Naive thymus-derived CD4-positive, alpha-beta T cell (primary cell): ENCODE measurements at regions of chr2 and their contacts with region 1.

Region 1: DNA sequence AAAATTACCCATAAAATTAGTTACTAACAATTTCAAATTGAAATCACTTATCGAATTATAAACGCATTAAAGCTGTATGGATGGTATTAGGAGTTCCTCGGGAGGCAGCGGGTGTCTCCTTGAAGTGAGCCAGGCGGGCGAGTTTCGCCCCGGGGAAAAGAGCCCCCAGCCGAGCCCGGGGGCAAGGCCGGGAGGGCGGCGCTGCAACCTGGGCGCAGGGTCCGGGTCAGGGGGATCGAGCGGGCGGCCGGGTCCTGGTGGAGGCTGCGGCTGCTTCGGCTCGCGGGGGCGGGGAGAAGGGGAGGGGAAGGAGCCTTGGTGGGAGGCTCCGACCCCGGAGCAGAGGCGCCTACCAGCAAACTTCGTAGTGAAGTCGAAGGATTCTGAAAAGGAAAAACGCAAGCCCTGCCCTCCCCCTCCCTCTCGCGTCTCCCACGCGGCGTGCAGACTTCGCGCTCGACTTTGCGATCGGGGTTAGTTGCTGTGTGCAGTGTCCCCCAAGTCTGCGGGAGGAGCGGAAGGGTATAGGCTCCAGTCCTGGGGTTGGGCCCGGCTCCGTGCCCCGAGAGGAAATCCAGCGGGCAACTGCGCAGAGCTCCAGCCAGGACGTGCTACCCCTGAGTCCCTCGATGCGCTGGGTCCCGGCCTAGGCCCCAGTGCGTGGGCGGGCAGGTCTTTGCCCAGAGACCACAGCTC is 140.8 kb downstream of the MEIS1 start:
- DNase-seq: no peak
- ATAC-seq: no peak
- H3K4me3 ChIP-seq: no peak overlapping the region
- H3K4me3 Mint-ChIP-seq: peak overlapping the region in 7 of 10 donors; percentile 29 to 72 (median 64)
- H3K27ac ChIP-seq: no peak overlapping the region
- H3K27ac Mint-ChIP-seq: peak overlapping the region in 1 of 9 donors; percentile 29
- H3K4me1 ChIP-seq: no peaks in the 10 kb centered on the region
- H3K4me1 Mint-ChIP-seq: peaks cover 0 to 16% (median 11%) of the 10 kb centered on the region in 7 donors
- H3K27me3 ChIP-seq: peaks cover 0 to 6% of the 10 kb centered on the region in 2 donors
- H3K27me3 Mint-ChIP-seq: peaks cover 57 to 75% (median 71%) of the 10 kb centered on the region in 5 donors

Region 2: DNA sequence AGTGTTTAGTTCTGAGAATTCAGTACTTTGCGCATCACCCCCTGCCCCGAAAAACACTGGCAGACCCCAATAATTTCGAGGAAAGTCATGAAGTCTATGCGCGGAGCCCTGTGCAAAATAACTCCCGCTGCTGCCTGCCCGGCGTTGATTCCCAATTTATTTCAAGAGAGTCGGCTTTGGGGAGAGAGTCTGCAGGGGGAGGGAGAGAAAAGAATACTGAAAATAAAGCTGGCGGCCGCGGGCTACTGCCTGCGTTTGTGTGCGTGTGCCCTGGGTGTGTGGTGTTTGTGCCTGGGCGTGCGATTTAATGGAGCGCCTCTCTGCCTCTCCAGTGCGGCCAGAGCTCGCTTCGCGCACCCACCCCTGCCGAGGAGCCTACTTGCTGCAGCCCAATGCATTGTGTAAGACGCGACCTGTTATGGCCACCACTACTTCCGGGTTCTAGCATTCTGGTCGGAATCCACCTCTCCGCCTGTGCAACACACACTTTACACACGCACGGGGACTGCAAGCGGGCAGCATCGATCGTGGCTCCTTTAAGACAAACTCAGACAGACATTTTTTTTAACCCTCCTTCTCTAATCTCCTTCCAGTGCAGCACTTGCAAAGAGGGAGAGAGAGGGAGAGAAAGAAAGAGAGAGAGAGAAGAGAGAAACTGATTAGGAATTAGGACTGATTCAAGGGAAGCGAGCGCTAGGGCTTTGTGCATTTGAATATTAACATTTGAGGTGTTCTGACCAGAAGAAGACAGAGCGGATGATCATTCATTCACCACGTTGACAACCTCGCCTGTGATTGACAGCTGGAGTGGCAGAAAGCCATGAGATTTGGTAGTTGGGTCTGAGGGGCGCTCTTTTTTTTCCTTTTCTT is 140.9 kb before region 1 on chr2 and contains the start of gene MEIS1:
- CTCF ChIA-PET with region 1: no interaction called
- POLR2A ChIA-PET with region 1: no interaction called
- intact Hi-C with region 1: loop called in 1 of 2 experiments (anchors 2 kb)
- DNase-seq: peak in 1 of 9 donors; percentile 0
- ATAC-seq: peak; percentile 73
- H3K4me3 ChIP-seq: peak within 1 kb of the TSS; percentile 20
- H3K4me3 Mint-ChIP-seq: peak within 1 kb of the TSS; percentile 66 to 88 (median 80)
- H3K27ac ChIP-seq: no peak within 1 kb of the TSS
- H3K27ac Mint-ChIP-seq: peak within 1 kb of the TSS in 2 of 9 donors; percentile 32 to 36
- H3K4me1 ChIP-seq: peaks cover 0 to 4% of the 10 kb centered on the region in 2 donors
- H3K4me1 Mint-ChIP-seq: peaks cover 22 to 47% (median 37%) of the 10 kb centered on the region in 7 donors
- H3K27me3 ChIP-seq: peaks cover 0 to 10% of the 10 kb centered on the region in 2 donors
- H3K27me3 Mint-ChIP-seq: peaks cover 76 to 91% (median 87%) of the 10 kb centered on the region in 5 donors
- total RNA-seq, gene MEIS1: 0.05 to 5.6 (median 0.56) TPM in 3 of 5 experiments, not detected in the others

Region 3: GRCh38 chr2:66982766-66983165 is 407.0 kb after region 1 on chr2:
- CTCF ChIA-PET with region 1: no interaction called
- POLR2A ChIA-PET with region 1: no interaction called
- intact Hi-C with region 1: no loop called
- DNase-seq: no peak
- ATAC-seq: no peak
- H3K4me3 ChIP-seq: no peak overlapping the region
- H3K4me3 Mint-ChIP-seq: no peak overlapping the region
- H3K27ac ChIP-seq: no peak overlapping the region
- H3K27ac Mint-ChIP-seq: no peak overlapping the region
- H3K4me1 ChIP-seq: no peaks in the 10 kb centered on the region
- H3K4me1 Mint-ChIP-seq: no peaks in the 10 kb centered on the region
- H3K27me3 ChIP-seq: no peaks in the 10 kb centered on the region
- H3K27me3 Mint-ChIP-seq: no peaks in the 10 kb centered on the region